ENCODE measurements at regions of chr13 and their contacts with region 1.

Region 1: GRCh38 chr13:108218044-108218974 is at the start of gene ABHD13:
- DNase-seq: peak; percentile 94
- ATAC-seq: peak; percentile 85
- H3K4me3 Mint-ChIP-seq: peak within 1 kb of the TSS; percentile 88
- H3K27ac Mint-ChIP-seq: peak within 1 kb of the TSS; percentile 94
- H3K4me1 Mint-ChIP-seq: peaks cover 52% of the 10 kb centered on the region
- H3K27me3 Mint-ChIP-seq: no peaks in the 10 kb centered on the region
- total RNA-seq, gene ABHD13: 3.4 to 4.4 TPM

Region 2: DNA sequence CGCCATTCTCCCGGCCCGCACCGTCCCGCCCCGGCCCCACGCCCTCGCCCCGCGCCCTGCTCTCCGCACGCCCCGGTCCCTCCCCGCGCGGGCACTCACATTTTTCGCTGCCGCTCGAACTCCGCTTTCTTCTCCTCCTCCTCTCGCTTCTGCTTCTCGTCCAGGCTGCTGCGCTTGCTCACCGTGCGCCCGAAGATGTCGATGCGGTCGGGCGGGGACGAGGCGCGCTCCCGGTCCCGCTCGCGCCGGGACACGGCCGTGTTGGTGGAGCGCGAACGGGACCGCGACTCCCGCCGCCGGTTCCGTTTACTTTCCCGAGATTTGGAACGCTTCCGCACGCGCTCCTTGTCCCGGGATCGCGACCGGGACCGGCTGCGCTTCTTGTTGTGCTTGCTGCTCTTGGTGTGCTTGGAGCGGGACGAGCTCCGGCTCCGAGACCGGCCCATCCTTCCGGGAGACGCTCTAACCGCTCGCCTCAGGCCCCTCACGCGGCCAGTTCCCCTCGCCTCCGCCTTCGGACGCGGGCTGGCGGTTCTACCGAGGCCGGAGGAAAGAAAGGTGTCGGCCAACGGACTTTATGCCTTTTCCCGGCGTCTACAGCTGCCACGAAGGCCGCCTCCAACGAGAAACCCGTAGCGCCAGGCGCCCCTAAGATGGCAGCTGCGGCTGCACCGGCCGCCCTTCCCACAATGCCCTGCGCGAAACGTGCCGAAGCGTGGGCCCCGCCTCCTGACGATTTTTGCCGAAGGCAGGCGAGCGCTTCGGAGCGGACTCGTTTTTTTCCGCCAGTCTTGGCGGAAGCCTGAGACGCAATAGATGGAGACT is 1650.6 kb before region 1 on chr13 and contains the start of gene ARGLU1:
- CTCF ChIA-PET with region 1: no interaction called
- POLR2A ChIA-PET with region 1: no interaction called
- intact Hi-C with region 1: loop called in 1 of 2 experiments (anchors 5 kb)
- DNase-seq: peak; percentile 97
- ATAC-seq: peak; percentile 88
- H3K4me3 Mint-ChIP-seq: peak within 1 kb of the TSS; percentile 97
- H3K27ac Mint-ChIP-seq: peak within 1 kb of the TSS; percentile 92
- H3K4me1 Mint-ChIP-seq: peaks cover 39% of the 10 kb centered on the region
- H3K27me3 Mint-ChIP-seq: no peaks in the 10 kb centered on the region
- total RNA-seq, gene ARGLU1: 68.8 to 94.2 TPM

Region 3: DNA sequence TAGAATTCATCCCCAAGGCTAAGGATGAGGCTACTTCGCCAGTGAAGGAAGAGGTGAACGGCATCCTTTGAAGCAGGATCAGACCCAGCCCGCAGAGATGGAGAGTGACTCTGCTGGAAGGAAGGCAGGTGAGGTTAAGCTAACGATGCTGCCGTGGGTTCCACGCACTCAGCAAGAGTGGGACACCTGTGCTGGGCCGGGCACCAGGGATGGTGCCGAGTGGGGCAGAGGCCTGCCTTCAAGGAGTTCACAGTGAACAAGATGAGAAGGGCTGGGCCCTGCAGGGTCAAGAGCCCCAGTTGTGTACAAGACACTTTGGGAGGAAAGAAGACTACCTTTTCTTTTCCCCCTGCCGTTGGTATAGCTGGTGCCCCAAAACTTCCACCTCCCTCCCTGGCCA is 609.6 kb before region 1 on chr13:
- CTCF ChIA-PET with region 1: no interaction called
- POLR2A ChIA-PET with region 1: no interaction called
- intact Hi-C with region 1: no loop called
- DNase-seq: no peak
- ATAC-seq: no peak
- H3K4me3 Mint-ChIP-seq: no peak overlapping the region
- H3K27ac Mint-ChIP-seq: no peak overlapping the region
- H3K4me1 Mint-ChIP-seq: no peaks in the 10 kb centered on the region
- H3K27me3 Mint-ChIP-seq: no peaks in the 10 kb centered on the region

Region 4: GRCh38 chr13:108166078-108166477 is 52.2 kb before region 1 on chr13:
- CTCF ChIA-PET with region 1: no interaction called
- POLR2A ChIA-PET with region 1: no interaction called
- intact Hi-C with region 1: no loop called
- DNase-seq: no peak
- ATAC-seq: no peak
- H3K4me3 Mint-ChIP-seq: no peak overlapping the region
- H3K27ac Mint-ChIP-seq: no peak overlapping the region
- H3K4me1 Mint-ChIP-seq: no peaks in the 10 kb centered on the region
- H3K27me3 Mint-ChIP-seq: peaks cover 3% of the 10 kb centered on the region

Region 5: DNA sequence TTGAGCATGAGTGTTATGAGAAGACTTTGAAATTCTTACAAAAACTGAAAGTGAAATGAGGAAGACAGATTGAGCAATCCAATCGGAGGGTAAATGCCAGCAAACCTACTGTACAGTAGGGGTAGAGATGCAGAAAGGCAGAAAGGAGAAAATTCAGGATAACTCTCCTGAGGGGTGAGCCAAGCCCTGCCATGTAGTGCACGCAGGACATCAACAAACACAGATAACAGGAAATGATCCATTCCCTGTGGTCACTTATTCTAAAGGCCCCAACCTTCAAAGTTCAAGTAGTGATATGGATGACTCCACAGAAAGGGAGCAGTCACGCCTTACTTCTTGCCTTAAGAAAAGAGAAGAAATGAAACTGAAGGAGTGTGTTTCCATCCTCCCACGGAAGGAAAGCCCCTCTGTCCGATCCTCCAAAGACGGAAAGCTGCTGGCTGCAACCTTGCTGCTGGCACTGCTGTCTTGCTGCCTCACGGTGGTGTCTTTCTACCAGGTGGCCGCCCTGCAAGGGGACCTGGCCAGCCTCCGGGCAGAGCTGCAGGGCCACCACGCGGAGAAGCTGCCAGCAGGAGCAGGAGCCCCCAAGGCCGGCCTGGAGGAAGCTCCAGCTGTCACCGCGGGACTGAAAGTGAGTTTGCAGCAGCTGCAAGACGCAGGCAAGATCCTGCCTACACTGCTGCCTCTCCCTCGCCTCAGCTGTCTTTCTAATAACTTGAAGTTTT is 51.5 kb after region 1 on chr13 and contains the start of gene TNFSF13B:
- CTCF ChIA-PET with region 1: no interaction called
- POLR2A ChIA-PET with region 1: no interaction called
- intact Hi-C with region 1: loop called in 1 of 2 experiments (anchors 1 kb)
- DNase-seq: peak; percentile 77
- ATAC-seq: peak; percentile 69
- H3K4me3 Mint-ChIP-seq: peak within 1 kb of the TSS; percentile 72
- H3K27ac Mint-ChIP-seq: peak within 1 kb of the TSS; percentile 82
- H3K4me1 Mint-ChIP-seq: peaks cover 43% of the 10 kb centered on the region
- H3K27me3 Mint-ChIP-seq: no peaks in the 10 kb centered on the region
- total RNA-seq, gene TNFSF13B: 2.3 to 2.4 TPM

Region 6: DNA sequence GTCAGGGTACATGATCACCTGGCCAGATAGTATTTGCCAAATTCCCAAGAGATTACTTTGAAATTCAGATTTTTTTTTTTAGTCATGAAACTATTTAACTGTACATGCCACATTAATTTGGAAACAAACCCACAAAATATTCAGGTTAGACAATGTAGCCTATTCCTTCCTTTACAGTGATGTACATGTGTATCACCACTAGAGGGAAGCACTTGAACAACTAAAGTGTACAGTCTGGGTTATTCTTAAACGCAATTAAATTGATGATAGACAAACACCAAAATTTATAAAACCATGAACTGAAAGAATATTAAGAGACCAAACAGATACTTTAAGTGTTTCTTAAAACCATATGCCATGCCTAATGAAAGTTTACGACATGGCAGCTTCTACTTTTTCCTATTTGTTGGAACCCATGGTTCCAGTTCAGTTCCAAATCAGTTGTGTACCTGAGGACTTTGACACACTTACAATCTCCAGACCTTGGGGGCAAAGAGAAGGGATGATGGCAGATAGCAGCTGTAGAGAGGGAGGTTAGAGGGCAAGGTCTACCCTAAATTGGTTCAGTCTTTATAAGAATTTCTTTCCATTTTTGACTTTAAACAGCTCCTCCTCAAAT is 104.0 kb after region 1 on chr13:
- CTCF ChIA-PET with region 1: no interaction called
- POLR2A ChIA-PET with region 1: no interaction called
- intact Hi-C with region 1: no loop called
- DNase-seq: no peak
- ATAC-seq: peak; percentile 83
- H3K4me3 Mint-ChIP-seq: no peak overlapping the region
- H3K27ac Mint-ChIP-seq: no peak overlapping the region
- H3K4me1 Mint-ChIP-seq: peaks cover 11% of the 10 kb centered on the region
- H3K27me3 Mint-ChIP-seq: peaks cover 2% of the 10 kb centered on the region

Region 7: GRCh38 chr13:108629181-108629752 is 411.0 kb after region 1 on chr13 and contains the start of gene MYO16:
- CTCF ChIA-PET with region 1: no interaction called
- POLR2A ChIA-PET with region 1: no interaction called
- intact Hi-C with region 1: no loop called
- DNase-seq: no peak
- ATAC-seq: no peak
- H3K4me3 Mint-ChIP-seq: no peak within 1 kb of the TSS
- H3K27ac Mint-ChIP-seq: no peak within 1 kb of the TSS
- H3K4me1 Mint-ChIP-seq: no peaks in the 10 kb centered on the region
- H3K27me3 Mint-ChIP-seq: peaks cover 10% of the 10 kb centered on the region
- total RNA-seq, gene MYO16: not detected

Region 8: GRCh38 chr13:108915634-108916512 is 697.6 kb after region 1 on chr13:
- CTCF ChIA-PET with region 1: no interaction called
- POLR2A ChIA-PET with region 1: no interaction called
- intact Hi-C with region 1: loop called in 1 of 2 experiments (anchors 5 kb)
- DNase-seq: peak; percentile 95
- ATAC-seq: peak; percentile 97
- H3K4me3 Mint-ChIP-seq: peak overlapping the region; percentile 62
- H3K27ac Mint-ChIP-seq: peak overlapping the region; percentile 88
- H3K4me1 Mint-ChIP-seq: peaks cover 19% of the 10 kb centered on the region
- H3K27me3 Mint-ChIP-seq: peaks cover 8% of the 10 kb centered on the region

Measured in activated CD4-positive, alpha-beta T cell treated with anti-CD3 and anti-CD28 coated beads for 36 hours (primary cell).